T-cell (primary cell): ENCODE measurements at regions of chrX and their contacts with region 1.

Region 1: GRCh38 chrX:13868591-13868990 is 51.7 kb upstream of the GPM6B start:
- DNase-seq: no peak
- ATAC-seq: no peak
- H3K4me3 ChIP-seq: no peak overlapping the region
- H3K4me3 Mint-ChIP-seq: no peak overlapping the region
- H3K27ac ChIP-seq: no peak overlapping the region
- H3K27ac Mint-ChIP-seq: no peak overlapping the region
- H3K4me1 ChIP-seq: no peaks in the 10 kb centered on the region
- H3K4me1 Mint-ChIP-seq: no peaks in the 10 kb centered on the region
- H3K27me3 ChIP-seq: no peaks in the 10 kb centered on the region
- H3K27me3 Mint-ChIP-seq: peaks cover 5 to 43% of the 10 kb centered on the region in 2 donors

Region 2: GRCh38 chrX:13742397-13743176 is 126.0 kb before region 1 on chrX:
- CTCF ChIA-PET with region 1: no interaction called
- POLR2A ChIA-PET with region 1: no interaction called
- DNase-seq: peak in 29 of 35 experiments; percentile 6 to 72 (median 23)
- ATAC-seq: peak; percentile 45 to 91 (median 70)
- H3K4me3 ChIP-seq: peak overlapping the region in 1 of 2 donors; percentile 17
- H3K4me3 Mint-ChIP-seq: peak overlapping the region; percentile 50 to 70 (median 56)
- H3K27ac ChIP-seq: peak overlapping the region; percentile 79
- H3K27ac Mint-ChIP-seq: peak overlapping the region; percentile 88 to 89
- H3K4me1 ChIP-seq: peaks cover 0 to 8% of the 10 kb centered on the region in 2 experiments
- H3K4me1 Mint-ChIP-seq: peaks cover 21 to 46% (median 29%) of the 10 kb centered on the region in 3 donors
- H3K27me3 ChIP-seq: no peaks in the 10 kb centered on the region
- H3K27me3 Mint-ChIP-seq: peaks cover 0 to 5% of the 10 kb centered on the region in 2 donors

Region 3: GRCh38 chrX:13851996-13852695 is 16.4 kb before region 1 on chrX:
- CTCF ChIA-PET with region 1: no interaction called
- POLR2A ChIA-PET with region 1: interaction called in 1 of 2 experiments, 11 read pairs
- DNase-seq: no peak
- ATAC-seq: no peak
- H3K4me3 ChIP-seq: no peak overlapping the region
- H3K4me3 Mint-ChIP-seq: no peak overlapping the region
- H3K27ac ChIP-seq: no peak overlapping the region
- H3K27ac Mint-ChIP-seq: no peak overlapping the region
- H3K4me1 ChIP-seq: no peaks in the 10 kb centered on the region
- H3K4me1 Mint-ChIP-seq: peaks cover 0 to 4% (median 2%) of the 10 kb centered on the region in 3 donors
- H3K27me3 ChIP-seq: no peaks in the 10 kb centered on the region
- H3K27me3 Mint-ChIP-seq: peaks cover 0 to 39% of the 10 kb centered on the region in 2 donors

Region 4: GRCh38 chrX:14039344-14039743 is 170.8 kb after region 1 on chrX:
- CTCF ChIA-PET with region 1: no interaction called
- POLR2A ChIA-PET with region 1: no interaction called
- DNase-seq: peak in 33 of 35 experiments; percentile 10 to 75 (median 47)
- ATAC-seq: peak; percentile 67 to 93 (median 82)
- H3K4me3 ChIP-seq: no peak overlapping the region
- H3K4me3 Mint-ChIP-seq: no peak overlapping the region
- H3K27ac ChIP-seq: no peak overlapping the region
- H3K27ac Mint-ChIP-seq: no peak overlapping the region
- H3K4me1 ChIP-seq: no peaks in the 10 kb centered on the region
- H3K4me1 Mint-ChIP-seq: no peaks in the 10 kb centered on the region
- H3K27me3 ChIP-seq: no peaks in the 10 kb centered on the region
- H3K27me3 Mint-ChIP-seq: peaks cover 5 to 37% of the 10 kb centered on the region in 2 donors